Heart left ventricle (tissue), 16 donors: ENCODE measurements at regions of chr9 and their contacts with region 1.

Region 1: GRCh38 chr9:93035821-93036351 is 22.6 kb upstream of the SUSD3 start:
- DNase-seq: no peak
- ATAC-seq: no peak
- H3K4me3 ChIP-seq: no peak overlapping the region
- H3K27ac ChIP-seq: no peak overlapping the region
- H3K4me1 ChIP-seq: peaks cover 0 to 39% (median 0%) of the 10 kb centered on the region in 12 donors
- H3K27me3 ChIP-seq: no peaks in the 10 kb centered on the region
- CTCF ChIP-seq: no peak
- POLR2A ChIP-seq: no peak

Region 2: GRCh38 chr9:93071464-93071863 is 35.6 kb after region 1 on chr9:
- intact Hi-C with region 1: loop called in 1 of 10 experiments (anchors 2 kb)
- DNase-seq: no peak
- ATAC-seq: peak in 3 of 4 donors; percentile 40 to 58 (median 44)
- H3K4me3 ChIP-seq: no peak overlapping the region
- H3K27ac ChIP-seq: peak overlapping the region in 1 of 12 donors; percentile 47
- H3K4me1 ChIP-seq: peaks cover 0 to 12% (median 2%) of the 10 kb centered on the region in 12 donors
- H3K27me3 ChIP-seq: no peaks in the 10 kb centered on the region
- CTCF ChIP-seq: no peak
- POLR2A ChIP-seq: no peak

Region 3: GRCh38 chr9:93091453-93092081 is 55.7 kb after region 1 on chr9:
- intact Hi-C with region 1: no loop called
- DNase-seq: peak in 3 of 5 donors; percentile 18 to 58 (median 21)
- ATAC-seq: no peak
- H3K4me3 ChIP-seq: no peak overlapping the region
- H3K27ac ChIP-seq: no peak overlapping the region
- H3K4me1 ChIP-seq: peaks cover 7 to 31% (median 22%) of the 10 kb centered on the region in 12 donors
- H3K27me3 ChIP-seq: no peaks in the 10 kb centered on the region
- CTCF ChIP-seq: no peak
- POLR2A ChIP-seq: no peak

Region 4: GRCh38 chr9:93268551-93269314 is 232.8 kb after region 1 on chr9:
- intact Hi-C with region 1: no loop called
- DNase-seq: no peak
- ATAC-seq: no peak
- H3K4me3 ChIP-seq: no peak overlapping the region
- H3K27ac ChIP-seq: no peak overlapping the region
- H3K4me1 ChIP-seq: peaks cover 0 to 15% (median 2%) of the 10 kb centered on the region in 12 donors
- H3K27me3 ChIP-seq: peaks cover 0 to 3% (median 0%) of the 10 kb centered on the region in 9 donors
- CTCF ChIP-seq: no peak
- POLR2A ChIP-seq: no peak